Gastrocnemius medialis (tissue), 4 donors: ENCODE measurements at regions of chrX and their contacts with region 1.

Region 1: GRCh38 chrX:14449782-14450181 is 79.6 kb upstream of the GLRA2 start:
- DNase-seq: no peak
- ATAC-seq: no peak
- H3K4me3 ChIP-seq: no peak overlapping the region
- H3K27ac ChIP-seq: no peak overlapping the region
- H3K4me1 ChIP-seq: no peaks in the 10 kb centered on the region
- H3K27me3 ChIP-seq: no peaks in the 10 kb centered on the region
- CTCF ChIP-seq: no peak
- POLR2A ChIP-seq: no peak

Region 2: DNA sequence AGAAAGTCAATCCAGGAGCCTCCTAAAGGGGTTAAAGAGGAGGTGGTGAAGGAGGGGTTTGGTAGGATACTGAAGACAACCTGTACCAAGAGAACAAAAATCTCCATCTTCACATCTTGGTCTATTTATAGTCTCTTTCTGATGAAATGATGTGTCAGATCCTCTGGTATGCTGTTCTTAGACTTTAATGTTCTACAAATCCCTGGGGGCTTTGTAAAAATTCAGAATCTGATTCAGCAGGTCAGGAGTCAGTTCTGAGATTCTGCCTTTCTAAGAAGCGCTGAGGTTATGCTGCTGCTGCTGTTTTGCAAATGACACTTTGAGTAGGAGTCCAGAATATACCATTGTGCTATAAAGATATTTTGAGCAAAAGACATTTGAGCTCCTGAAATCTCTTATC is 93.4 kb before region 1 on chrX:
- in situ Hi-C with region 1: loop called in 1 of 4 experiments (anchors 25 kb)
- intact Hi-C with region 1: no loop called
- DNase-seq: no peak
- ATAC-seq: no peak
- H3K4me3 ChIP-seq: no peak overlapping the region
- H3K27ac ChIP-seq: no peak overlapping the region
- H3K4me1 ChIP-seq: no peaks in the 10 kb centered on the region
- H3K27me3 ChIP-seq: no peaks in the 10 kb centered on the region
- CTCF ChIP-seq: no peak
- POLR2A ChIP-seq: no peak

Region 3: GRCh38 chrX:14398725-14399124 is 51.1 kb before region 1 on chrX:
- in situ Hi-C with region 1: no loop called
- intact Hi-C with region 1: no loop called
- DNase-seq: no peak
- ATAC-seq: no peak
- H3K4me3 ChIP-seq: no peak overlapping the region
- H3K27ac ChIP-seq: no peak overlapping the region
- H3K4me1 ChIP-seq: no peaks in the 10 kb centered on the region
- H3K27me3 ChIP-seq: no peaks in the 10 kb centered on the region
- CTCF ChIP-seq: no peak
- POLR2A ChIP-seq: no peak

Region 4: DNA sequence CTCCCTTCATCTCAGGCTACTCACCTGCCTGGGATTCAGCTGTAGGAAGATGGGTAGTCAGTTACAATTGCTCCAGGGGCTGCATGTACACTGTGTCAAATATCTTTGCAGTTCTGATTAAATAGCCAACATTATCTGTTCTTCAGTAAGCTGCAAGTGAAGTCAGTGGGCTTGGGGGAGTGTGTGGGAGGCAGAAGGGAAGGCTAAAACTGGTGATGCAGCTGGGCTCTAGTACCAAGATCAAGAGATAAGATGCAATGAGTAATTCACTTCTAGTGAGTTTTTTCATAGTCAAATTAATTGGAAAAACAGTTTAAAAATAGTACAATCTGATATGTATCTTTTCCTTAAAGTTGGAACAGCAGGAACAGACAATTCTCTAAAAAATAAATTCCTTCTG is 40.4 kb after region 1 on chrX:
- in situ Hi-C with region 1: no loop called
- intact Hi-C with region 1: no loop called
- DNase-seq: no peak
- ATAC-seq: no peak
- H3K4me3 ChIP-seq: no peak overlapping the region
- H3K27ac ChIP-seq: no peak overlapping the region
- H3K4me1 ChIP-seq: no peaks in the 10 kb centered on the region
- H3K27me3 ChIP-seq: no peaks in the 10 kb centered on the region
- CTCF ChIP-seq: no peak
- POLR2A ChIP-seq: no peak

Region 5: DNA sequence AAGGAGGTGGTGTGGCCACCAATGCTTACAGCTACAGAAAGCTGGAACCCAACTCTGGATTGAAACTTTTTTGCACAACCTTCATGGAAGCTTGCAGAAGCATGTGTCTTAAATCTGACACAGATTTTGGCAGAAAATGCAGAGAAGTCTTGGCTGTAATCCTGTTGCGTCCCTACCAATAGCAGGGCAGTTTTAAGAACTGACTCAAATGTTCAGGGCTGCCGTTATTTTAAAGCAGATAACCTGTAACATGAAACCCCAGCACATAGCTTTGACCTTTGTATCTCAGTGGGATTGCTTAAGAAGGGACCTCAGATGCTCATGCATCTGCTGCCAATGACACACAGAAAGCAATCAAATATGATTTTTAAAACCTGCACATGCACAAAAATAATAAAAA is 934.5 kb after region 1 on chrX and contains the start of gene VEGFD:
- in situ Hi-C with region 1: no loop called
- intact Hi-C with region 1: no loop called
- DNase-seq: peak; percentile 3 to 35
- ATAC-seq: peak; percentile 68 to 90
- H3K4me3 ChIP-seq: no peak within 1 kb of the TSS
- H3K27ac ChIP-seq: peak within 1 kb of the TSS in 1 of 4 donors; percentile 31
- H3K4me1 ChIP-seq: peaks cover 0 to 10% of the 10 kb centered on the region in 2 donors
- H3K27me3 ChIP-seq: peaks cover 0 to 4% (median 0%) of the 10 kb centered on the region in 3 donors
- CTCF ChIP-seq: no peak
- POLR2A ChIP-seq: no peak
- total RNA-seq, gene VEGFD: 5.1 to 16.8 (median 9.0) TPM